Activated T-helper 1 cell treated with anti-CD3 and anti-CD28 coated beads, Interleukin-12 subunit alpha, Interleukin-12 subunit beta, Interleukin-2, Interleukin-4 antibody, amounts not matched to agents 30 ng/mL and 10 ng/mL and 1 ng/mL, durations not matched to agents 14 hours and 24 hours and 36 hours (primary cell): ENCODE measurements at regions of chr9 and their contacts with region 1.

Region 1: GRCh38 chr9:120868676-120869359 is 8.2 kb downstream of the PHF19 start:
- DNase-seq: peak; percentile 93
- H3K4me3 Mint-ChIP-seq: peak overlapping the region; percentile 88
- H3K27ac Mint-ChIP-seq: peak overlapping the region; percentile 91
- H3K4me1 Mint-ChIP-seq: peaks cover 48% of the 10 kb centered on the region
- H3K27me3 Mint-ChIP-seq: no peaks in the 10 kb centered on the region

Region 2: DNA sequence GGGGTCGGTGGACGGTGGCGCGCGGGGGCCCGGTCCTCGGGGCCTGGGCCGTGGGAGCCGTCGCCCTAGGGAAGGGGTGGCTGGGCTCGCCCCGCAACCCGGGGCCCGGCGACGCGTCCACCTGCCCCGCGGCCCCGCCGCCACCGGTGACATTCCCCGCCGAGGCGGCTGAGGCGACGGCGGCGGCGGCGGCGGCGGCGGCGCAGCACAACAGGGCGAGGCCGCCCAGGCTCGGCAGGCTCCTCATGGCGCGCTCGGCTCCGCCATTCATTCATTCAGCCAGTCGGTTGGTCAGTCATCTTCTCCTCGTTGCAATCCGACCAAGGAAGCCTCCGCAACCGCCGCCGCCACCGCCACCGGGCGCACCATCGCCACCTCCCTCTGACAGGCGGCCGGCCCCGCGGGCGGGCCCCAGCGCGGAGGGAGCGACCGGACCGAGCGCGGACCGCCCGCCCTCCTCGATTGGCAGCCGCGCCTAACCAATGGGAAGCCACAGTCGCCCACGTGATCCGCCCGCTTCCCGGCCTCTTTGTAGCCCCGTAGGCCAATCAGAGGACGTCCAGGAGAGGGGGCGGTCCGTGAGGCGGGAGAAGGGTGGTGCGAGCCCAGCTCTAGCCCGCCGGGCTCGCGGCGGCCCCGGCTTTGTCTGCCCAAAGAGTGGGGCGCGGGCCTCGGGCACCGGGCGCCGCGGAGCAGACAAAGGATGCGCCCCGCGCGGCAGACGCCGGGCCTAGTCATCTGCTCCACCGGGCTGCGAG is 154.6 kb before region 1 on chr9 and contains the start of gene MEGF9:
- intact Hi-C with region 1: loop called (anchors 1 kb)
- DNase-seq: peak; percentile 96
- H3K4me3 Mint-ChIP-seq: peak within 1 kb of the TSS; percentile 92
- H3K27ac Mint-ChIP-seq: peak within 1 kb of the TSS; percentile 82
- H3K4me1 Mint-ChIP-seq: peaks cover 41% of the 10 kb centered on the region
- H3K27me3 Mint-ChIP-seq: no peaks in the 10 kb centered on the region
- total RNA-seq, gene MEGF9: 5.4 and 5.9 TPM in 2 replicates

Region 3: DNA sequence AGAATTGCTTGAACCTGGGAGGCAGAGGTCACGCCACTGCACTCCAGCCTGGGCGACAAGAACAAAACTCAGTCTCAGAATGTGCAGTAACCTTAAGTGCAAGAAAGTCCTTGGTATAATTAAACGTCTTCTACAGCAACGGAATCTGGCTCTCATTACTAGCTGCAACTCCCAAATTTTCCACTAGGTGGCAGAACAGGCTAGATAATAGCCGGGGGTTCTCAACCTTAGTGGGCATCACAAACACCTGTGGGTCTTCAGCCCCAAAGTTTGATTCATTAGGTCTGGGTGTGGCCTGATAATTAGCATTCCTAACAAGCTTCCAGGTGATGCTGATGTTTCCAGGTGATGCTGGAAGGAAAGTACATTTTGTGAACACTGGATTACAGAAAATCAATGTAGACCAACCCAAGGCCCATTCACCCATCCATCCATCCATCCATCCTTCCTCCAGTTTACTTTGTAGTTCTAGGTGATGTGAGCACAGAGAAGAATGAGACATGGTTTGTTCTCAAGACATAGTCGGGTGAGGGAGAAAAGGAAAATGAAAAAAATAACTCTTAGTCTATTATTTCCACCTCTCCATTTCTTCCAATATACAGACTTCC is 112.9 kb before region 1 on chr9:
- intact Hi-C with region 1: loop called (anchors 5 kb)
- DNase-seq: peak; percentile 53
- H3K4me3 Mint-ChIP-seq: no peak overlapping the region
- H3K27ac Mint-ChIP-seq: no peak overlapping the region
- H3K4me1 Mint-ChIP-seq: peaks cover 30% of the 10 kb centered on the region
- H3K27me3 Mint-ChIP-seq: no peaks in the 10 kb centered on the region

Region 4: GRCh38 chr9:120892748-120893610 is 24.2 kb after region 1 on chr9:
- intact Hi-C with region 1: loop called (anchors 1 kb)
- DNase-seq: peak; percentile 62
- H3K4me3 Mint-ChIP-seq: peak overlapping the region; percentile 69
- H3K27ac Mint-ChIP-seq: peak overlapping the region; percentile 99
- H3K4me1 Mint-ChIP-seq: peaks cover 74% of the 10 kb centered on the region
- H3K27me3 Mint-ChIP-seq: no peaks in the 10 kb centered on the region

Region 5: DNA sequence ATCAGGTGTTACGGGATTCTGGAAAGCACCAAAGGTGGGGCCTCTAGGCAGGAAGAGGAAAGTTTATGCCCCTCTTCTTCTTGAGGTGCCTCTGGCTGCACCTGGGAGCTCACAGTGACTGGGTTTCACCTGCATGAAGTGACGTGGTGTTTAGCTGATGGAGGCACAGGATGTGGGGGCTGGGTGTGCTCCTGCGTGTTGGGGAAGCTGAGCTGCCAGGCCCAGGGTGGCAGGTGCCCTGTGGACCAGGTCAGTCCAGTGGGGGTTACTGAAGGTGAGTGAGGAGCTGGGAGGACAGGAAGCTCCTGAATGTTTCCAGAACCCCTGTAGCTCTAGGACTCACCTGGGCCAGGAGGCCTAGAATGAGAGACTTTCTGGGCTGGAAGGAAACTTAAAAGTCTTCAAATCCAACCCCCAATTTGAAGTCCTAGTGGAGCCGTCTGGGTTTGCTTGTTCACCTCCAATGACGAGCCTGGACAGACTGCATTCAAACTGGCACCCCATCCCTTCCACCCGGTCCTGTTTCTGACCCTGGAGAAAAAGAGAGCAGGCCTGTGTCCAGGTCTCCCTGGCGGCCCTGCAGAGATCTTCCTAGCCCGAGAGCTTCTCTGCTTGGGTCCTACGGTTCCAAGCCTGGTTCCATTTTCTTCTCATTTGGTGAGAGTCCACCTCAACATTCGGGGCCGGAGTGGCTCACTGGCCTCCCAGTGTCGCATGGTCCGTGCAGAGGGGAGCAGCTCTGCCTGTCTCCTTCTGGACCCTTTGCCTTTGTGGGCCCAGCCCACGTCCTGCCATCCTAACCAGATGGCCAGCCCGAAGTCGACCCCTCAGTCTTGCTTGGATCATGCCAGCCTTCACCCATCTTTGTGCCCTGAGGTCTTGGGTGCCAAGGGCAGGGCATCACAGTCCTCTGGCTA is 35.5 kb after region 1 on chr9:
- intact Hi-C with region 1: no loop called
- DNase-seq: peak; percentile 43
- H3K4me3 Mint-ChIP-seq: peak overlapping the region; percentile 67
- H3K27ac Mint-ChIP-seq: peak overlapping the region; percentile 88
- H3K4me1 Mint-ChIP-seq: peaks cover 82% of the 10 kb centered on the region
- H3K27me3 Mint-ChIP-seq: no peaks in the 10 kb centered on the region

Region 6: DNA sequence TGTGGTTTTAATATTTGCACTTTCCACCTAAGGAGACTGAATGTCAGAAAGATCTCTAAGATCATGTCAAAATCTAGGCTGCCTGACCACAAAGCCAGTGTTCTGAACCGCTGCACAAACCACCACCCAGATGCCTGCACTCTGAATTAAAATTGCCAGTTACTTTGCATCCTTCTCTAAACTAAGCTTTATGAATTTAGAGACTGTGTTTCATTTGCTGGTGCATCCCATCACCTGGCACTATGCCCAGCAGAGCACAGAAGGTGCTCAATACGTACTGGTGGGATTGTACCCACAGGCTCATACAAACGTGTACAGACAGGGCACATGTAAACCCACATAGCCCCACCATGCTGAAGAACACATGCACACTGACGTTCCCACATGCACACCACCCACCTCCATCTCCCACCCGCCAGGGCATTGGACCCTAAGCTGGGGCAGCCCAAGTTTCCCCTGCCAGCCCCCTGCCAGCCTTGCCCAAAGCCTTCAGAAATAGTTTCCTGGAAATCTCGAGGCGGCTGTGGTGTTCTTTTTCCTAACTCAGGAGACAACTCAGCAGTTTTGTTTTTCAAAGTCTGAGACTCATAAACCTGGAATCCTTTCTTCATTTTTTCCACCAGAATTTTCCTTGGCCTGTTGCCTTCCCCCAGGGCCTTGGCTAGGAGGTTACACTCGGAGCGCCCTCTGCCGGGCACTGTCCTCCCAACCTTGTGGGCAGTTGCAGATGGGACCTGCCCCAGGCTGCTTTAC is 67.4 kb after region 1 on chr9:
- intact Hi-C with region 1: loop called (anchors 1 kb)
- DNase-seq: peak; percentile 77
- H3K4me3 Mint-ChIP-seq: peak overlapping the region; percentile 59
- H3K27ac Mint-ChIP-seq: peak overlapping the region; percentile 90
- H3K4me1 Mint-ChIP-seq: peaks cover 58% of the 10 kb centered on the region
- H3K27me3 Mint-ChIP-seq: peaks cover 3% of the 10 kb centered on the region

Region 7: DNA sequence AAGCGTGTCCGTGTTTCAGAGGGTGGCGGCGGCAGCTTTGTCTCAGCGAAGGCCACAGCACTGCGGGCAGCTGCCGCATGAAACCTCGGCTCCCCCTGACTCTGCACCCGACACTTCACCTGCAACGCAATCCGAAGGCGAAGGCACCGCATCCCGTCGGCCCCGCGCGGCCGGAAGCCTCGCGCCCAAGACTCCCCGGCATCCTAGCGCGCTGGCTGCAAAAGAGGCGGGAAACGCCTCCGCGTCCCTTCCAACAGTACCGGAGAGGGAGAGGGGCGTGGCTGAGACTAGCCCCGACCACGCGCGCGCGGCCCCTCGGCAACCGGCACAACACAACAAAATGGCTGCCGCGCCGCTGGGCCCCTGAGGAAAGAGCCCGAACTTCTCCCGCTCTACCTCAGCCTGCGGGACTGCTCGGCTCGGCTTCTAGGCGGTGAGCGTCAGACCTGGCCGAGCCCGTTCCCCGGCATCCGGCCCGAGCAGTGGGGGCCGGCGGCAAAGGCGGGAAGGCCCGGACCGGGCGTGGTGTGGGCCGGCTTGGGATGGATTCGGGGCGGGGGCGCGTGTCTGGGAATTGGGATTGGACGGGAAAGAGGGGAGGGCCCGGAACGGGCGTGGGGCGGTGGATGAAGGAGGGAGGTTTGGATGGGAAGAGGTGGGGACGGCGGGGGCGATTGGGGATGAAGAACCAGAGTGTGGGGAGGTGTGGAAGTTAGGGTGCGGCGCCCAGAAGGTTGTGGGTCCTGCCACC is 206.0 kb after region 1 on chr9 and contains the start of gene CNTRL:
- intact Hi-C with region 1: loop called (anchors 2 kb)
- DNase-seq: peak; percentile 90
- H3K4me3 Mint-ChIP-seq: peak within 1 kb of the TSS; percentile 100
- H3K27ac Mint-ChIP-seq: peak within 1 kb of the TSS; percentile 91
- H3K4me1 Mint-ChIP-seq: peaks cover 57% of the 10 kb centered on the region
- H3K27me3 Mint-ChIP-seq: no peaks in the 10 kb centered on the region
- total RNA-seq, gene CNTRL: 69.9 and 74.2 TPM in 2 replicates